ENCODE measurements at regions of chr9 and their contacts with region 1.

Region 1: GRCh38 chr9:37496020-37496419 is 10.3 kb downstream of the POLR1E start:
- DNase-seq: no peak
- H3K4me3 ChIP-seq: no peak overlapping the region
- H3K27ac ChIP-seq: no peak overlapping the region
- H3K4me1 ChIP-seq: no peaks in the 10 kb centered on the region
- H3K27me3 ChIP-seq: no peaks in the 10 kb centered on the region
- CTCF ChIP-seq: no peak
- POLR2A ChIP-seq: no peak

Region 2: GRCh38 chr9:35538361-35539234 is 1957.4 kb before region 1 on chr9:
- intact Hi-C with region 1: loop called (anchors 10 kb)
- DNase-seq: peak in 1 of 2 donors; percentile 55
- H3K4me3 ChIP-seq: peak overlapping the region; percentile 27 to 63 (median 50)
- H3K27ac ChIP-seq: peak overlapping the region; percentile 83 to 95
- H3K4me1 ChIP-seq: peaks cover 4 to 10% of the 10 kb centered on the region in 2 donors
- H3K27me3 ChIP-seq: no peaks in the 10 kb centered on the region
- CTCF ChIP-seq: no peak
- POLR2A ChIP-seq: peak; percentile 6

Region 3: DNA sequence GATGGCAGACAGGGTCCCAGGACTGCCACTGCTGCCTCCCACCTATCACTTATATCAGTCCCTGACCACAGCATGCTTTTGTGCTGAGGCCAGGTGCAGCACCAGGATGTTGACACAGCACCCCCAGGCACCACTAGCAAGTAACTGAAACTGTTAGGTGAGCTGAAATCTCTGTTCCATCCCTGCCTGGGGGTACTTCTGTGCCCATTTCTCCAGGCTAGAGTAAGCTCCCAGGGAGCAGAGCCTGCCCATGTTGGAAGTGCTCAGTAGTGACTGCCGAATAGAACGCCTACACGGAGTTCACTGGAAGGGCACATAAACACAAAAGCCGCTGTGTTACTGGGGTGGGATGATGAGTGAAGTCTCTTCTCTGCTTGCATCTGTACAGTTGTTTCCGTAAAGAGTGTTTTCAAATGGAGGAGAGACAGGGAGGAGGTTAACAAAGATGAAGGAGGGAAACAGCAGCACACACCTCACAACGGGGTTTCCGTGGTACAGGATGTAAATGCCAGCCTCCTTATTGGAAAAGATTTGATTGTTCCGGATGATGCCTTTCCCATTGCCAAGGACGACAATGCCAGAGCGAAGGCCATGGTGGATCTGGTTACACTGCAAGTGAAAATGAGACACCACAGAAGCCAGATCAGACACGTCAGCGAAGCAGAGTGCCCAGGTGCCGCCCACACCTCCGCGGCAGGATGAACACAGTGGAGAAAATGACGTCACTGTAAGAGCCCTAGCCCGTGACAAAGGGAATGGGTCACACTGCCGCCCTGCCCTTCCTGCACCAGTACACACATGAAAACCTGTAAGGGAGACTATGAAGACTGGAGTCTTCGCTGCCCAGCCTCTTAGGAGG is 32.9 kb after region 1 on chr9:
- intact Hi-C with region 1: no loop called
- DNase-seq: peak in 1 of 2 donors; percentile 75
- H3K4me3 ChIP-seq: peak overlapping the region in 2 of 3 donors; percentile 22 to 47
- H3K27ac ChIP-seq: peak overlapping the region; percentile 67 to 77
- H3K4me1 ChIP-seq: no peaks in the 10 kb centered on the region
- H3K27me3 ChIP-seq: no peaks in the 10 kb centered on the region
- CTCF ChIP-seq: no peak
- POLR2A ChIP-seq: no peak

Region 4: DNA sequence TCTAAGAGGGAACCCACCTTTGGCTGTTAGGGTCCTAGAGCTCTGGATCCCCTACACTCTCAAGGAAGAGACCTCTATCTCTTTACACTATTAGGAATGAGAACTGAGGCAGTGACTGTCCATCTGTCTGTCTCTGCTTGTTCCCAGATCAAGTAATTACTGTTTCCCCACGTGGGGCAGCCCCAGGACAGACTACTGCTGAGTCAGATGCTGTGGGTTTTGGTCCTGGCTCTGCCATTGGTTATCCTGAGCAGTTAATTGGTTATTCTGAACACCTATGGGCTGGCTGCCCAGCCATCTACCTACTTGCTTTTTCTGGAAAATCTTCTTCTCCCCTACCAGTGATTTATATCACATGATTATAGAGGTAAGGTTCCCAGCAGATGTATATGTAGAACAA is 46.9 kb after region 1 on chr9:
- intact Hi-C with region 1: loop called (anchors 2 kb)
- DNase-seq: no peak
- H3K4me3 ChIP-seq: no peak overlapping the region
- H3K27ac ChIP-seq: no peak overlapping the region
- H3K4me1 ChIP-seq: no peaks in the 10 kb centered on the region
- H3K27me3 ChIP-seq: no peaks in the 10 kb centered on the region
- CTCF ChIP-seq: no peak
- POLR2A ChIP-seq: no peak

Region 5: GRCh38 chr9:37575921-37576721 is 80.1 kb after region 1 on chr9 and contains the start of gene FBXO10:
- intact Hi-C with region 1: no loop called
- DNase-seq: peak; percentile 39 to 61
- H3K4me3 ChIP-seq: peak within 1 kb of the TSS; percentile 64 to 71 (median 70)
- H3K27ac ChIP-seq: peak within 1 kb of the TSS; percentile 64 to 83
- H3K4me1 ChIP-seq: peaks cover 0 to 3% of the 10 kb centered on the region in 2 donors
- H3K27me3 ChIP-seq: no peaks in the 10 kb centered on the region
- CTCF ChIP-seq: no peak
- POLR2A ChIP-seq: no peak
- total RNA-seq, gene FBXO10: 5.1 to 6.9 (median 5.9) TPM

Measured in breast epithelium (tissue), 4 donors.